Activated B cell treated with CpG ODN at 0.5 μM for 24 hours (primary cell): ENCODE measurements at regions of chr16 and their contacts with region 1.

Region 1: GRCh38 chr16:58306327-58306726 is 11.5 kb upstream of the PRSS54 start:
- DNase-seq: peak; percentile 22
- ATAC-seq: no peak
- H3K4me3 Mint-ChIP-seq: no peak overlapping the region
- H3K27ac Mint-ChIP-seq: no peak overlapping the region
- H3K4me1 Mint-ChIP-seq: no peaks in the 10 kb centered on the region
- H3K27me3 Mint-ChIP-seq: peaks cover 5% of the 10 kb centered on the region
- CTCF ChIP-seq: no peak

Region 2: GRCh38 chr16:57899771-57900661 is 406.3 kb before region 1 on chr16:
- CTCF ChIA-PET with region 1: no interaction called
- POLR2A ChIA-PET with region 1: no interaction called
- intact Hi-C with region 1: loop called (anchors 5 kb)
- DNase-seq: peak; percentile 48
- ATAC-seq: peak; percentile 68
- H3K4me3 Mint-ChIP-seq: no peak overlapping the region
- H3K27ac Mint-ChIP-seq: no peak overlapping the region
- H3K4me1 Mint-ChIP-seq: no peaks in the 10 kb centered on the region
- H3K27me3 Mint-ChIP-seq: peaks cover 23% of the 10 kb centered on the region
- CTCF ChIP-seq: no peak

Region 3: DNA sequence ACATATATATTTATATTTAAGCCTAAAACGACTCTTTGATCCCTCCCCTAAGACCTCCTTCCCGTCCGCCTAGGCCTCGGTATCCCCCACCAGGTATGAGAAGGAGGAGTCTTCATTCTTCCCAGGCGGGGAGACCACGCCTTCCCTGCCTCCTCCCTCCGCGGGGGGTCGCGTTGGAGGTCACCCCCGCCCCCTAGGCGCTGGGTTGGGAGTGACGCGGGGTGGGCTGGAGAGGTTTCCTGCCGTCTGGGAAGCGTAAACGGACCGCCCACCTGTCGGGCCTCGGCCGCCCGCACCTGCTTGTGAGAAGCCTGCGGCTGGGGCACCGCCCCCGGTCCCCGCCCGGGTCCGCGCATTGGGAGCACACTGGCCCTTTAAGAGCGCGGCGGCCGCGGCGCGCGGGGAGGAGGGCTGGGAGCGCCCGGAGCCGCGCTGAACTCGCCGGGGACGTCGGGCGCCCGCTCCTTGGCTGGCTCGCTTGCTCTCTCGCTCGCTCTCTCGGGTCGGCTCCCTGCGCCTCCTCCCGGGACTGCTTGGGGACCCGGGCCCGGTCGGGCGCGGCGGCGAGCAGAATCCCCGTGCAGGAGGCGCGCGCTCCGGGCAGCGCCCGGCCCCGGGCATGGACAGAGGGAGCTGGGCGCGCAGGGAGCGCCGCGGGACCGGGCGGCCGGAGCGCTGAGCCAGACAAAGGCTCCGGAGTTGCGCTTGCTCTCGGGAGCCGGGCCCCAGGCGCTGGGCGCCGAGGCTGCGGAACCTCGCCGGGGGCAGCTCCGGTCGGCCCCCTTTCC is 280.8 kb before region 1 on chr16 and contains the start of gene MMP15:
- CTCF ChIA-PET with region 1: no interaction called
- POLR2A ChIA-PET with region 1: no interaction called
- intact Hi-C with region 1: loop called (anchors 1 kb)
- DNase-seq: peak; percentile 47
- ATAC-seq: peak; percentile 69
- H3K4me3 Mint-ChIP-seq: peak within 1 kb of the TSS; percentile 84
- H3K27ac Mint-ChIP-seq: peak within 1 kb of the TSS; percentile 36
- H3K4me1 Mint-ChIP-seq: peaks cover 11% of the 10 kb centered on the region
- H3K27me3 Mint-ChIP-seq: peaks cover 23% of the 10 kb centered on the region
- CTCF ChIP-seq: no peak
- total RNA-seq, gene MMP15: 0.60 TPM in 1 of 2 replicates, not detected in the other

Region 4: GRCh38 chr16:58198022-58198683 is 108.2 kb before region 1 on chr16 and contains the start of gene CSNK2A2:
- CTCF ChIA-PET with region 1: interaction called, 5 read pairs
- POLR2A ChIA-PET with region 1: no interaction called
- intact Hi-C with region 1: loop called (anchors 1 kb)
- DNase-seq: peak; percentile 73
- ATAC-seq: peak; percentile 94
- H3K4me3 Mint-ChIP-seq: peak within 1 kb of the TSS; percentile 87
- H3K27ac Mint-ChIP-seq: peak within 1 kb of the TSS; percentile 65
- H3K4me1 Mint-ChIP-seq: peaks cover 33% of the 10 kb centered on the region
- H3K27me3 Mint-ChIP-seq: no peaks in the 10 kb centered on the region
- CTCF ChIP-seq: no peak
- total RNA-seq, gene CSNK2A2: 77.3 and 85.5 TPM in 2 replicates